Head of caudate nucleus (tissue), 42 donors: ENCODE measurements at regions of chr7 and their contacts with region 1.

Region 1: GRCh38 chr7:20786779-20787659 is at the start of gene SP8:
- DNase-seq: peak in 1 of 42 donors; percentile 44

Region 2: GRCh38 chr7:19117091-19117869 is 1669.7 kb before region 1 on chr7 and contains the start of gene TWIST1:
- intact Hi-C with region 1: loop called (anchors 10 kb)
- DNase-seq: peak in 1 of 42 donors; percentile 5

Region 3: DNA sequence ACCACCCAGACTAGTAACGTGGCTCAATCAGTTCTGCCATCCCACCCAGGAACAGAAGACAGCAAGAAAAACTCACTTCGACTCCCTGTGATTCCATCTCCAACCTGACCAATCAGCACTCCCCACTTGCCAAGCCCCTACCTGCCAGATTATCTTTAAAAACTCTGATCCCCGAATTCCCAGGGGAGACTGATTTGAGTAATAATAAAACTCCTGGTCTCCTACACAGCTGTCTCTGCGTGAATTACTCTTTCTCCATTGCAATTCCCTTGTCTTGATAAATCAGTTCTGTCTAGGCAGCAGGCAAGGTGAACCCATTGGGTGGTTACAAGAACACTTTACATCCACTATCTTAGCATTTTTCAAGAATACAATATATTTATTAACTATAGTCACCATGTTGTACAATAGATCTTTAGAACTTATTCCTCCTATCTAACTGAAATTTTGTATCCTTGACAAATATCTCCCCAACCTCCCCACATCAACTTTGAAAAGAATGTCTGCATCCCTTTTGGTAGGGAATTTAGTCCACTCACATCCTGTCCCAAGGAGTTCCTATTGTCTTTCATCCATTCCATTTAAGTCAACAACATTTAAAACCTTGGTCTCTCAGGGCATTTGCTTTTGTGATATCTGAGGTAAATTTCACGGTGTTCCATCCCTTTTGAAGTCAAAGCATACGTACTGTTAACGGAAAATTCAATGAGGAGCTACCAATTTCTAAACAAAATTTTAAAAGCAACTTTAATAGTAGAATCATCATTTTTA is 733.5 kb before region 1 on chr7:
- intact Hi-C with region 1: no loop called
- DNase-seq: no peak

Region 4: GRCh38 chr7:20107582-20107981 is 679.4 kb before region 1 on chr7:
- intact Hi-C with region 1: no loop called
- DNase-seq: no peak

Region 5: DNA sequence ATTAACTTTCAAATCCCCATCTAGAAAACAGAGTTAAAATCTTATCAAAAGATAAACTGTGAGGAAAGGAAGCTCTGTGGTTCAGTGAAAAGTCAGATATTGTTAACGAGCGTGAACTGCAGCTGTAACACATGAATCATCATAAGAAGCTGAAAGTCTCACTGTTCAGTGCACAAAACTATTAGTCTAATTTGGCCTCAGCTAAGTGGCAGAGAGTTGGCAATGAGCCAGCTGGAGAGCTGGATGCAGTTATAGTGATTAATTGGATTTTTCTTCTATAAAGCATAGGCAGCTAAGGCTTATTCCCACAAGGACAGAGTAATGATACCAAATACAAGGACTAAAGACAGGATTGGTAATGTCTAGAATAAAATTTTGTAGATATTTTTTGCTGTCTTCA is 272.7 kb before region 1 on chr7:
- intact Hi-C with region 1: no loop called
- DNase-seq: peak; percentile 6 to 88 (median 61)

Region 6: GRCh38 chr7:21184937-21185651 is 398.1 kb after region 1 on chr7:
- intact Hi-C with region 1: no loop called
- DNase-seq: no peak

Region 7: GRCh38 chr7:21253740-21254687 is 467.0 kb after region 1 on chr7:
- intact Hi-C with region 1: loop called (anchors 10 kb)
- DNase-seq: peak; percentile 5 to 85 (median 66)